Activated T-helper 1 cell treated with anti-CD3 and anti-CD28 coated beads, Interleukin-12 subunit alpha, Interleukin-12 subunit beta, Interleukin-2, Interleukin-4 antibody, amounts not matched to agents 30 ng/mL and 10 ng/mL and 1 ng/mL, durations not matched to agents 14 hours and 24 hours and 36 hours (primary cell): ENCODE measurements at regions of chr10 and their contacts with region 1.

Region 1: GRCh38 chr10:68471586-68472408 is at the start of gene DNA2:
- DNase-seq: peak; percentile 71
- H3K4me3 Mint-ChIP-seq: peak within 1 kb of the TSS; percentile 96
- H3K27ac Mint-ChIP-seq: peak within 1 kb of the TSS; percentile 95
- H3K4me1 Mint-ChIP-seq: peaks cover 25% of the 10 kb centered on the region
- H3K27me3 Mint-ChIP-seq: no peaks in the 10 kb centered on the region
- total RNA-seq, gene DNA2: 50.2 and 54.3 TPM in 2 replicates

Region 2: GRCh38 chr10:67818320-67818719 is 653.5 kb before region 1 on chr10:
- intact Hi-C with region 1: no loop called
- DNase-seq: no peak
- H3K4me3 Mint-ChIP-seq: no peak overlapping the region
- H3K27ac Mint-ChIP-seq: no peak overlapping the region
- H3K4me1 Mint-ChIP-seq: peaks cover 36% of the 10 kb centered on the region
- H3K27me3 Mint-ChIP-seq: no peaks in the 10 kb centered on the region

Region 3: DNA sequence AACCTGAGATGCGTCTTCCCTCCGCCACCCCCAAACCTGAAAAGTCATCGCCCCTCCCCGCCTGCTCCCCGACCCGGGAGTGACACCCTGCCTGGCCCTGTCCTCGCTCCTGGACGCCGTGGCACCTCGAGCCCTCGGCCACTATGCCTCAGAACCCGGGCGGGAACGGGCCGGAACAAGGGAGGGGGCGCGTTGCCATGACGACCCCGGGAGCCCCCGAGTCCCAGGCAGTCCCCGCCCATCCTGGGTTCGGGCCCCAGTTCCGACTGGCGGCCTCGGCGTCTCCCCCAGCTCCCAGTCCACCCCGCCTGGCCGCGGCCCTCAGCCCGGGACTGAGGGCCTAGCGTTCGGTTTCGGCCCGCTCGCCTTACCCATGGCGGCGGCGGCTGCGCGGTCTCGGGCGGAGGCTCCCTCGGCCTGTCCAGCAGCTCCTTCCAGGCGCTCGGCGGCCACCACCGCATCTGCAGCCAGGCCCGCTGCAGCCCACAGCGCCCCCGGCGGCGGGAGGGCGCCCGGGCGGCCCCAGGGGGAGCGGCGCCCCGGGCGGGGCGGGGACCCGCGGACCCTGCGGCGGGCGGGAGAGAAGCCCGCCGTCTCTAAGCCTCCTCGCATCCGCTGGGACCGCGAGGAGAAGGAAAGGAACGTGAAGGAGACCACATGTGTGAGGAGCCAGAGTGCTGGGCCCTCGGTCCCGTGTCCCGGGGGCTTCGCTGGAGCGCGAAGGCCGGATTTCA is 64.8 kb before region 1 on chr10 and contains the start of gene RUFY2:
- intact Hi-C with region 1: loop called (anchors 1 kb)
- DNase-seq: peak; percentile 77
- H3K4me3 Mint-ChIP-seq: peak within 1 kb of the TSS; percentile 90
- H3K27ac Mint-ChIP-seq: peak within 1 kb of the TSS; percentile 80
- H3K4me1 Mint-ChIP-seq: peaks cover 13% of the 10 kb centered on the region
- H3K27me3 Mint-ChIP-seq: no peaks in the 10 kb centered on the region
- total RNA-seq, gene RUFY2: 10.4 and 12.3 TPM in 2 replicates

Region 4: GRCh38 chr10:68446179-68446578 is 25.6 kb before region 1 on chr10:
- intact Hi-C with region 1: loop called (anchors 2 kb)
- DNase-seq: no peak
- H3K4me3 Mint-ChIP-seq: no peak overlapping the region
- H3K27ac Mint-ChIP-seq: no peak overlapping the region
- H3K4me1 Mint-ChIP-seq: no peaks in the 10 kb centered on the region
- H3K27me3 Mint-ChIP-seq: no peaks in the 10 kb centered on the region